Activated T-helper 2 cell treated with anti-CD3 and anti-CD28 coated beads, Interferon-gamma antibody, Interleukin-2, Interleukin-4, amounts not matched to agents 10 μg/mL and 5 μg/mL and 100 μg/mL, durations not matched to agents 14 hours and 24 hours and 36 hours (primary cell): ENCODE measurements at regions of chr2 and their contacts with region 1.

Region 1: GRCh38 chr2:215828517-215829184 is 184.7 kb downstream of the MREG start:
- DNase-seq: peak; percentile 16
- H3K4me3 Mint-ChIP-seq: no peak overlapping the region
- H3K27ac Mint-ChIP-seq: peak overlapping the region; percentile 23
- H3K4me1 Mint-ChIP-seq: peaks cover 16% of the 10 kb centered on the region
- H3K27me3 Mint-ChIP-seq: no peaks in the 10 kb centered on the region

Region 2: DNA sequence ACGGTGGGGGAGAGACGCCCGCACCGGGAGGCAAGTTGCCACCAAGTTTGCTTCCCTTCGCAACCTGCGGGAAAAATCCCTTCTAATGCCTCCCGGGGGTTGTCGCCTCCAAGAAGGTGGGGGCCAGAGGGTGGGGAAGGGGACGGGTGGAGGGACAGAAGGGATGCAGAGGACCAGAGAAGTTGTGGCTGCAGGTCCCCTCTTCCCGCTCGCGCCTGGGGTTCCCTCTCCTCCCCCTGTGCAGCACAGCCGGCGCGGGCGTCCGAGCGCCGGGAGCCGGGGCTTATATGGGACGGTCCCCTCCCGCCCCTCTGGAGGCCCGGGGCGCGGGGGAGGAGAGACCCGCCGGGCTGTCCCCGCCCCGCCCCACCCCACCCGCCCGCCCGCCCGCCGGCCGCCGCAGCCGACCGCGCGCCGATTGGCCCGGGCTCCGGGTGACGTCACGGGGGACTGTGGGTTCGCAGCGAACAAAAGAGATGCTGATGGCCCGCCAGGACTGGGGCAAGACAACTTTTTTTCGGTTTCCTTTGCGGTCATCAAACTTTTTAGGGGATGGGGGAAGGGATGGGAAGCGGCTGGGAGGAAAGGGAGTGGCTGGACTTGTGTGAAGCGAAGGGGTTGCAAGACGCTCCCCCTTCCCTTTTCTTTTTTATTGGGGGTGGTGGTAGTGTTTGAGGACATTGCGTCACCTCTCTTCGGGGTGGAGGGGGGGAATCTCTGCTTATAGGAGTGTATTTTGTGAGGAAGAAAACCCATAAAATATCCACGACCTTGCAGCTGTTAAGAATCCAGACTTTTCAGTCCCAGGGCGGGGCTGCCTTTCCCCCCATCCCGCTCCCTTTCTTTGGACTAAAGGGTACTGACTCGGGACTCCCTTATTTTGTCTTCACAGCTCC is 392.6 kb before region 1 on chr2 and contains the start of gene FN1:
- intact Hi-C with region 1: loop called (anchors 5 kb)
- DNase-seq: peak; percentile 62
- H3K4me3 Mint-ChIP-seq: peak within 1 kb of the TSS; percentile 80
- H3K27ac Mint-ChIP-seq: peak within 1 kb of the TSS; percentile 17
- H3K4me1 Mint-ChIP-seq: peaks cover 15% of the 10 kb centered on the region
- H3K27me3 Mint-ChIP-seq: peaks cover 70% of the 10 kb centered on the region
- total RNA-seq, gene FN1: 4.5 and 6.3 TPM in 2 replicates

Region 3: GRCh38 chr2:215454519-215455246 is 374.0 kb before region 1 on chr2:
- intact Hi-C with region 1: loop called (anchors 1 kb)
- DNase-seq: no peak
- H3K4me3 Mint-ChIP-seq: no peak overlapping the region
- H3K27ac Mint-ChIP-seq: no peak overlapping the region
- H3K4me1 Mint-ChIP-seq: no peaks in the 10 kb centered on the region
- H3K27me3 Mint-ChIP-seq: peaks cover 13% of the 10 kb centered on the region

Region 4: DNA sequence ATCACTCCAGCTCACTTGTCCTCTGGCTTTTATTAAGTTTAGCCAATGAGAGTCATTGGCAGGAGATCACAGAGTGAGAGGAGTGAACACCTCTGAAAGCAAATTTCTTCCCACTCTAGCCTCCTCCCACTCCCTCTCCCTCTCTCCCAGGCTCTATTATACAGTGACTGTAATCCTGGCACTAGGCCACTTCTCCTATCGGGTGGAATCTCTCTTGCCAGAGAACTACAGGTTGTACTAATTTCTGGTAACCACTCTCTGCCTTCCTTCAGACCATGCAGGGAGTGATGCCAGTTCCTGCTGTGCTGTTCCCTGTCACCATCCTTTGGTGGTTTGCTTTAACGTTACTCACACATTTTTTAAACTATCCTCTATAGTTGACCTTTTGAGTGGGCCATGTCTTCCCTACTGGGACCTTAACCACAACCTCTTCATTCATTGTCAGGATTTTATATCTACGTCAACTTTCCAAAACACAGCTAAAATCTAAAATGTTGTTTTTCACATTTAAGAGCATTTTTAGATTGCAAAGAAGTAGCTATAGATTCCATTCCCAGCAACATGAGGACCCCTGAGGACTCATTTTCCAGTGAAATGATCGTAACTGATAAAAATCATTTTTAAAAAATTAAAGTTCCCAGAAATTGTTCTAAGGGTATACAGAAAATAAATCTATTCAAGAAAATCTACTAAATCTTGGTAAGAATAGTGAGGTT is 32.4 kb before region 1 on chr2:
- intact Hi-C with region 1: loop called (anchors 5 kb)
- DNase-seq: no peak
- H3K4me3 Mint-ChIP-seq: no peak overlapping the region
- H3K27ac Mint-ChIP-seq: peak overlapping the region; percentile 26
- H3K4me1 Mint-ChIP-seq: peaks cover 27% of the 10 kb centered on the region
- H3K27me3 Mint-ChIP-seq: no peaks in the 10 kb centered on the region